ENCODE measurements at regions of chr11 and their contacts with region 1.

Region 1: GRCh38 chr11:59097113-59097708 is 9.8 kb upstream of the FAM111B start:
- DNase-seq: peak in 5 of 10 donors; percentile 17 to 60 (median 52)
- H3K4me3 ChIP-seq: no peak overlapping the region
- H3K27ac ChIP-seq: no peak overlapping the region
- H3K27me3 ChIP-seq: peaks cover 0 to 23% (median 1%) of the 10 kb centered on the region in 45 donors
- CTCF ChIP-seq: peak; percentile 28 to 78 (median 63)

Region 2: GRCh38 chr11:59135648-59136461 is 38.6 kb after region 1 on chr11:
- intact Hi-C with region 1: loop called (anchors 2 to 10 kb)
- DNase-seq: peak; percentile 58 to 87 (median 76)
- H3K4me3 ChIP-seq: peak overlapping the region in 34 of 59 donors; percentile 8 to 51 (median 37)
- H3K27ac ChIP-seq: no peak overlapping the region
- H3K27me3 ChIP-seq: no peaks in the 10 kb centered on the region
- CTCF ChIP-seq: peak; percentile 75 to 97 (median 93)

Region 3: DNA sequence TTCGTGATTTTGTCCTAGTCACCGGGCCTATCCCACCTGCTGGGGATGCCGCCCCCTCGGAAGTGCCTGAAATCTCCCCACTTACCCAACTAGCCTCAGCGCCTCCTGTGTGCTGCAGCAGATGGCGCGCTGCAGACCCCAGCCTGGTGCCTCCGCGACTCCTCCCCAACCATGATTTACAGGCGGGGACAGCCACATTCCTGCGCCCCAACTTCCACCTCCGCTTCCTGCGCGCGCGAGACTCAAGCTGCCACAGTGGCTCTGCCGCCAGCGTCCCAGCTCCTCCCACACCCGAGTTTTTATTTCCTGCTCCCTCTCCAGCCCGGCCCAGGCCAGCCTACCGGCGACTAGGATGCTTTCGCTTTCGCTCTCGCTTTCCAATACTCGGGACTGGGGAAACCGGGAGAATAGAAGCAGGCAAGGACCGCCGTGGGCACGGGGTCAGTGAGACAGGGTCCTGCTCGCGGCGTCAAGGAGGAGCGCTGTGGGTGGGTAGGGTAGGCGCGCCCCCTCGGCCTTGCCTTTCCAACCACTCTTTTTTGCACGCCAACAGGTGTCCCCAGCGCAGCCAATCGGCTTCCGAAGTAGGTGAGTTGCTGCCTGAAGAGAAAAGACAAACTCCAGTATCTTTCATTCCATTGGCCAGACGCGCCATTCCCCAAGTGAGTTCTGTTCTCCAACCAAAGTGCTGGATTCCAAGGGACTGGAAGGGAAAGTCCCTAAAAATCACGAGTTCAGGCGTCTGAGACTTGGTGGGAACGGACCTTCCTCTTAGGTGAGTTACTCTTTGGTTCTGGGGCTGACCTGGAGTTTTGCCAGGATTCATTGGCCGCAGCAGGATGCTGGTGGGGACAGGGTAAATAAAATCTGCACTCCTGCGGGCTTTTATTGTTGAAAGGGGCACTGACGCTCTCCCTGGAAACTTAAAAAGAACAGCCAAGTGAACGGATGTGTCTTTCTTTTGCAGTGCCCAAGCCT is 45.6 kb after region 1 on chr11 and contains the start of gene FAM111A:
- intact Hi-C with region 1: loop called in 1 of 2 experiments (anchors 10 kb)
- DNase-seq: peak; percentile 53 to 86 (median 75)
- H3K4me3 ChIP-seq: peak within 1 kb of the TSS; percentile 62 to 98 (median 83)
- H3K27ac ChIP-seq: peak within 1 kb of the TSS in 56 of 59 donors; percentile 12 to 94 (median 80)
- H3K27me3 ChIP-seq: no peaks in the 10 kb centered on the region
- CTCF ChIP-seq: peak in 48 of 56 donors; percentile 7 to 55 (median 34)
- total RNA-seq, gene FAM111A: 2.6 to 22.5 (median 9.5) TPM

Region 4: DNA sequence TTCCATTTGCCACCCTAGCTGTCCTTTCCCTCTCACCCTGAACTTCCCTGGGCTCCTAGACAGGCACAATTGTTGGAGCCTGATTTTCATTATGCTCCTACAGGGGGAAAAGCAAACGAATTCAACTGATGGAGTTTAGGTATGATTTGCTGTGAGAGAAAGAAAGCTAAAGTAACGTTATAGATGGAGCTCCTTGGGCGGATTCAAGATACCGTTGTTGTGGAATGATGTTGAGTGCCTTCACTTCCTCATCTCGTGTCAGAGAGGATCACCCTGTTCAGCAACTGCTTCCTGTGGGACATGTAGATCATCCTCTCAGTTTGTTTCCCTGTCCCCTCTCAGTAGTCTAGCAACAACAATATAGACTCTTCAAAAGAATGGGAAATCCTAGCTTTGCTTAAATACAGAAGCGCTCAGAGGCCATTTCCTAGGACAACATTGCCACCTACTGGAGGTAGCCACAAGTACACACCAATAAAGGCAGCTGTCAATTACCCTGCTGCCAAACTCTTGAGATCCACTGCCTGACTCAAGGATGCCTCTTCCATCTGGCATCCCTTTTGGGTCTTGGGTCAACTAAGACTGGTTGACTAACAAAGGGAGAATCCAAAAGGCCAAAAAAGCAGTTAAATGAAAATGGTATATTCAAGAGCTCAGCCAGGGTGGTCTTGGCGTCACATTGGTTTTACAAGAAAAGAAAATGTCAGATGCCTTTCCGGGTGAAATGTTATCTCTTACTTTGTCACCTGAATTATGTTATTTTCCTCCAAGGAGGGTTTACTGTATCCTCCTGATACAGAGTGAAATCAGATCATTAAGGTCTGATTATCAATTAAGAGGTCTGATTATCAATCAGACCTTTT is 61.2 kb after region 1 on chr11:
- intact Hi-C with region 1: loop called in 1 of 2 experiments (anchors 5 kb)
- DNase-seq: peak in 3 of 10 donors; percentile 44 to 69 (median 67)
- H3K4me3 ChIP-seq: peak overlapping the region in 3 of 59 donors; percentile 9 to 32 (median 20)
- H3K27ac ChIP-seq: no peak overlapping the region
- H3K27me3 ChIP-seq: peaks cover 0 to 4% (median 0%) of the 10 kb centered on the region in 45 donors
- CTCF ChIP-seq: peak; percentile 72 to 95 (median 87)

Region 5: GRCh38 chr11:59479906-59480305 is 382.7 kb after region 1 on chr11:
- intact Hi-C with region 1: no loop called
- DNase-seq: no peak
- H3K4me3 ChIP-seq: no peak overlapping the region
- H3K27ac ChIP-seq: no peak overlapping the region
- H3K27me3 ChIP-seq: no peaks in the 10 kb centered on the region
- CTCF ChIP-seq: no peak

Measured in dorsolateral prefrontal cortex (tissue), 120 donors.